Activated naive CD4-positive, alpha-beta T cell treated with anti-CD3 and anti-CD28 coated beads for 36 hours (primary cell): ENCODE measurements at regions of chr15 and their contacts with region 1.

Region 1: GRCh38 chr15:78149068-78149804 is at the start of gene IDH3A:
- DNase-seq: peak; percentile 100
- H3K4me3 Mint-ChIP-seq: peak within 1 kb of the TSS; percentile 89
- H3K27ac Mint-ChIP-seq: peak within 1 kb of the TSS; percentile 89
- H3K4me1 Mint-ChIP-seq: peaks cover 41% of the 10 kb centered on the region
- H3K27me3 Mint-ChIP-seq: no peaks in the 10 kb centered on the region
- total RNA-seq, gene IDH3A: 117 to 123 TPM

Region 2: DNA sequence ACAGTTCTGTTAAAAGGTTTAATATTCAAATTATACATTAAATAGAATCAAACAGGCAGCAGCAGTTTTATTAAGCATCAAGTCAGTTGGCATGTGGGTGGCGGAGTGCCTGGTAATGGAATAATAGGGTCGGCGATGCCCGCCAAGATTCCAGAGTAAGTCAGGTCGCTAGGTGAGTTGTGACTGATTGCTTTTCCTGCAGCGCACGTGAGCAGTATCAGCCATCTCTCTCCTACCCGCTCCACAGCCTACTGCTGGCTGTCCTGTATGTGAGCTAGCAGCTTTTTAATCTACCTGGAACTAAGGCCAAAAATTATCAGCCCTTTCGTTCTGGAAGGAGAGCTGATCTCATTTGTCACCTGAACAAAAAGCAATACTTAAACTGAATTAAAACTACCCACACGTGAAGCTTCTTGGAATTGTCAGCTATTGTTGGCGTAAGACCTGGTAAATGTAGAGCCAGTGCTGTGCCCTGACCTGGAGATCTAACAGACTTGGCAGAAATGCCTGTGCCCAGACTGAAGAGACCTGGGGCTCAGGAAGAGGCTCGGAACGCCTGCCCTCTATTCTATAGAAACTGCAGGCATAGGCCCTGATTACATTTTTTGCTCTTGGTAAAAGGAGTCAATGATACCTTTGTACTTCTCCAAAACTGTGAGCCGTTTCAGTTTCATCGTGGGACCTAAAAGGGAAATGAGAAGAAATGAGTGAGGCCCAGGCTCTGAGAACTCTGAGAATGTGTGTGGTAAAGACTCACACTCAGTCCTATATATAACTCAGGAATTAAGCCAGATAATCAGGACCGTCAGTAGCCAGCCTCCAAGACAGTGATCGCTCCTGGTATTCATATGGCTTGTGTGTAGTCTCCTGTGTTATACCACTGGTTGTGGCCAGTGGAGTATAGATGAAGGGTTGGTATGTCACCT is 21.9 kb after region 1 on chr15:
- CTCF ChIA-PET with region 1: no interaction called
- intact Hi-C with region 1: loop called (anchors 1 kb)
- DNase-seq: no peak
- H3K4me3 Mint-ChIP-seq: no peak overlapping the region
- H3K27ac Mint-ChIP-seq: no peak overlapping the region
- H3K4me1 Mint-ChIP-seq: peaks cover 38% of the 10 kb centered on the region
- H3K27me3 Mint-ChIP-seq: no peaks in the 10 kb centered on the region

Region 3: DNA sequence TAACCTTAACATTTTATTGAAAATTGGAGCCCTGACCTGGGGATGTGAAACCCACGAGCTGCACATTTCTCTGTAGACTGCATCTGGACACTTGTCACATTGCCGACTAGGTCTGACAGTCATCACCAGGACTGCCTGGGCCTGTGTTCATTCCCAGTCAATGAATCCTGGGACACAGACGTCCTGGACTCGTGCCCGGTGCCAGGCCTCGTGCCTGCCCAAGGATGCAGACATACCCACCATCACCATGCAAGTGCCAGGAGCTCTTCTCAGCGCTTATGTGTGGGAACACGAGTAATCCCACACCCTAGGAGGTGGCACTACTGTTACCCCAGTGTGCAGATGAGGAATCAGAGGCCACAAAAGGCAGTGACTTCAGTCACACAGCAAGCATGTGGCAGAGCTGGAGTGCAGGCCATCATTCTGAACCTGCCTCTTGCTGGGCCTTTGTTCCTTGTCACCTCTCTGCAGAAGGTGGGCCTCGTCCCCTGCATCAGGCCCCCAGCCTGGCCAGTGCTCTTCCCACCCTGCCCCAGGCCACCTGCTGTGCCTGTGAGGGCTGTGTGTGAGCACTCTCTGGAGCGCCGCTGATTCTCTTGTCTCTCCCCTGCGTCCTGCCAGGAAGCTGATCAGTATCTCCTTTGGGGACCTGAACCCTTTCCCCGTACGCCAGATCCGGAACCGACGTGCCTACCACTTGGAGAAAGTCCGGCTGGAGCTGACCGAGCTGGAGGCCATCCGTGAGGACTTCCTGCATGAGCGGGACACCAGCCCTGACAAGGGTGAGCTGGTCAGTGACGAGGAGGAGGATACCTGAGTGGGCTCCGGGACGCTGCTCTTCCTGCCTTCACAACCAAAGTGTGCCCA is 603.5 kb after region 1 on chr15:
- CTCF ChIA-PET with region 1: no interaction called
- intact Hi-C with region 1: no loop called
- DNase-seq: no peak
- H3K4me3 Mint-ChIP-seq: no peak overlapping the region
- H3K27ac Mint-ChIP-seq: no peak overlapping the region
- H3K4me1 Mint-ChIP-seq: peaks cover 17% of the 10 kb centered on the region
- H3K27me3 Mint-ChIP-seq: no peaks in the 10 kb centered on the region